Left ventricle myocardium inferior (tissue), 1 donor: ENCODE measurements at regions of chr15 and their contacts with region 1.

Region 1: GRCh38 chr15:75307778-75308391 is 25.2 kb downstream of the GOLGA6D start:
- DNase-seq: no peak
- H3K4me3 ChIP-seq: no peak overlapping the region
- H3K27ac ChIP-seq: no peak overlapping the region
- H3K4me1 ChIP-seq: no peaks in the 10 kb centered on the region
- H3K27me3 ChIP-seq: peaks cover 72% of the 10 kb centered on the region
- CTCF ChIP-seq: peak; percentile 41

Region 2: GRCh38 chr15:75090388-75090734 is 217.5 kb before region 1 on chr15:
- intact Hi-C with region 1: no loop called
- DNase-seq: peak; percentile 50
- H3K4me3 ChIP-seq: no peak overlapping the region
- H3K27ac ChIP-seq: peak overlapping the region; percentile 83
- H3K4me1 ChIP-seq: peaks cover 8% of the 10 kb centered on the region
- H3K27me3 ChIP-seq: no peaks in the 10 kb centered on the region
- CTCF ChIP-seq: no peak

Region 3: DNA sequence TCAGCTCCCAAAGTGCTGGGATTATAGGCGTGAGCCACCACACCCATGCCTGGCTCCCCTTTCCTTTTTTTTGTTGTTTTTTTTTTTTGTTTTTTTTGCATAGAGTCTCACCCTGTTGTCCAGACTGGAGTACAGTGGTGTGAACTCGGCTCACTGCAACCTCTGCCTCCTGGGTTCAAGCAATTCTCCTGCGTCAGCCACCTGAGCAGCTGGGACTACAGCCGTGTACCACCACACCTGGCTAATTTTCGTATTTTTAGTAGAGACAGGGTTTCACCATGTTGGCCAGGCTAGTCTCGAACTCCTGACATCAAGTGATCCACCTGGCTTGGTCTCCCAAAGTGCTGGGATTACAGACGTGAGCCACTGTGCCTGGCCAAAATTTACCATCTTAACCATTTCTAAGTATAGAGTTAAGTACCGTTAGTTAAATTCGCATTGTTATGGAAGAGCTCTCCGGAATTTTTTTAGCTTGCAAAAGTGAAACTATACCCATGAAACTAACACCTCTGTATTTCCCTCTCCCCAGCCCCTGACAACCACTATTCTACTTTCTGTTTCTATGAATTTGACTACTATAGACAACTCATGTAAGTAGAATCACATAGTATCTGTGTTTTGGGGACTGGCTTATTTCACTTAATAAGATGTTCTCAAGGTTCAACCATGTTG is 177.2 kb before region 1 on chr15:
- intact Hi-C with region 1: no loop called
- DNase-seq: no peak
- H3K4me3 ChIP-seq: no peak overlapping the region
- H3K27ac ChIP-seq: no peak overlapping the region
- H3K4me1 ChIP-seq: no peaks in the 10 kb centered on the region
- H3K27me3 ChIP-seq: no peaks in the 10 kb centered on the region
- CTCF ChIP-seq: no peak

Region 4: DNA sequence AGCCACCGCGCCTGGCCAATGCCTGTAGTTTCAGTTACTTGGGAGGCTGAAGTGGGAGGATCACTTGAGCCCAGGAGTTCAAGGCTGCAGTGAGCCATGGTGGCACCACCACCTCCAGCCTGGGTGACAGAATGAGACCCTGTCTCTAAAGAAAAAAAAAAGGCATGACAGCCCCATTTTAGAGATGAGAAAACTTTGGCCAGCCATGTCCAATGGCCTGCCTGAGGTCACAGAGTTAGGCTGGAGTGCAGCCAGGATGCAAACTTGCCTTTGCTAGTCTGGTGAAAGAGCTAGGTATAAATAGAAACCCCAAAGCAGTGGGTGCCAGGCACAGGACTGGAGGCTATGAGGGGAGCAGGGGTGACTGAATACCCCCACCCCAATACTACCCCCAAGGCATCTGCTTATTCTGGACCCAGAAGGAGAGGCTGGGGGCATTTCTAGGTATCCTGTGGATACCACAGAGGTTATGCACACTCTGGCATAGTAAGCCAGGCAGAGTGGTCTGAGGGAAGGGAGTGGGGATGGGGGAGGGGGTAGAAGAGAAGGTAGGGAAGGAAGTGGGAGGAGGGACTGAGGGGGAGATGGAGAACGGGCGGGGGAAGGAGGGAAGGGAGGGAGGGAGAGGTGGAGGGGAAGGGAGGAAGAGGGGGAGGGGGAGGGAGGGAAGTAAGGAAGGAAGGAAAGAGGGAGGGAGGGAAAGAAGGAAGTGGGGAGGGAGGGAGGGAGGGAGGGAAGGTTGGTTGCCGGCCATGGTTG is 122.4 kb before region 1 on chr15:
- intact Hi-C with region 1: no loop called
- DNase-seq: no peak
- H3K4me3 ChIP-seq: no peak overlapping the region
- H3K27ac ChIP-seq: no peak overlapping the region
- H3K4me1 ChIP-seq: peaks cover 10% of the 10 kb centered on the region
- H3K27me3 ChIP-seq: no peaks in the 10 kb centered on the region
- CTCF ChIP-seq: no peak

Region 5: GRCh38 chr15:75229191-75230015 is 78.5 kb before region 1 on chr15:
- intact Hi-C with region 1: loop called (anchors 10 kb)
- DNase-seq: no peak
- H3K4me3 ChIP-seq: no peak overlapping the region
- H3K27ac ChIP-seq: no peak overlapping the region
- H3K4me1 ChIP-seq: peaks cover 15% of the 10 kb centered on the region
- H3K27me3 ChIP-seq: peaks cover 21% of the 10 kb centered on the region
- CTCF ChIP-seq: no peak